ENCODE measurements at regions of chr3 and their contacts with region 1.

Region 1: DNA sequence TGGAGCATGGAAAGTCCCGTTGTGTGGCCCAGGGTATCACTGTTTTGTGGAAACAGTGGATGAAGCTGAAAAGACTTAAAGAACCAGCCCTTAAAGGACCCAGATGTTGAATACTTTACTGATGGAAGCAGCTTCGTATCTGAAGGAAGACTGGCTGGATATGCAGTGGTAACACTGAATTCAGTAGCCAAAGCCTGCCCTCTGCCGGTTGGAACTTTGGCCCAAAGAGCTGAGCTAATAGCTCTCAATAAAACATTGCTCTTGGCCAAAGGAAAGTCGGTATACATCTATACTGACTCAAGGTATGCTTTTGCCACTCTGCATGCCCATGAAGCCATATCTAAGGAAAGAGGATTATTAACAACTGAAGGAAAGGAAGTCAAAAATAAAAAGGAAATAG is 885.4 kb downstream of the PDCD6IP start:
- DNase-seq: peak in 3 of 5 donors; percentile 2 to 4 (median 2)
- H3K4me3 ChIP-seq: no peak overlapping the region
- H3K4me3 Mint-ChIP-seq: no peak overlapping the region
- H3K27ac ChIP-seq: no peak overlapping the region
- H3K27ac Mint-ChIP-seq: no peak overlapping the region
- H3K4me1 ChIP-seq: no peaks in the 10 kb centered on the region
- H3K4me1 Mint-ChIP-seq: no peaks in the 10 kb centered on the region
- H3K27me3 ChIP-seq: no peaks in the 10 kb centered on the region
- H3K27me3 Mint-ChIP-seq: no peaks in the 10 kb centered on the region

Region 2: DNA sequence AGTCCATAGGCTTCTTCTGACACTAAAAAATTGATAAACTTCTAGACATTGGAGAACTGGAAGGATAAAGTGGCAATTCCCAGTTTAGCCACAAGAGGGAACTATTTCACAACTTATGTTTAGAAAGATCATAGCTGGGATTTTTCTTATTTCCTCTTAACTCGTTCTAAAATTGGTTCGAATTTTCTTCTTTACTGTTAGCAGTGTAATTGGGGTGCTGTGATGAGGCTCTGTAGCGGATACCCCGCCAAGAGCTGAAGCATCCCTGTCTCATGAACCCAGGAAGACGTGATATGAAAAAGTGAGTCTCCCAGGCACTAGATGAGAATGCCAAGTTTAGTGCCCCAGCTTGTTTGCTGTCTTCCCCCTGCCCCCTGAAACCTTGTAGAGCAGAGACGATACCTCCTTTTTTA is 800.3 kb before region 1 on chr3:
- CTCF ChIA-PET with region 1: interaction called, 8 read pairs
- POLR2A ChIA-PET with region 1: no interaction called
- intact Hi-C with region 1: loop called (anchors 5 kb)
- DNase-seq: peak in 4 of 5 donors; percentile 40 to 43 (median 41)
- H3K4me3 ChIP-seq: no peak overlapping the region
- H3K4me3 Mint-ChIP-seq: peak overlapping the region in 6 of 8 donors; percentile 63 to 81 (median 75)
- H3K27ac ChIP-seq: no peak overlapping the region
- H3K27ac Mint-ChIP-seq: peak overlapping the region in 2 of 7 donors; percentile 7 to 81
- H3K4me1 ChIP-seq: peaks cover 4% of the 10 kb centered on the region
- H3K4me1 Mint-ChIP-seq: peaks cover 2 to 5% (median 3%) of the 10 kb centered on the region in 4 donors
- H3K27me3 ChIP-seq: no peaks in the 10 kb centered on the region
- H3K27me3 Mint-ChIP-seq: peaks cover 0 to 7% of the 10 kb centered on the region in 2 donors

Region 3: GRCh38 chr3:34842706-34843480 is 159.0 kb after region 1 on chr3:
- CTCF ChIA-PET with region 1: no interaction called
- POLR2A ChIA-PET with region 1: no interaction called
- intact Hi-C with region 1: no loop called
- DNase-seq: no peak
- H3K4me3 ChIP-seq: no peak overlapping the region
- H3K4me3 Mint-ChIP-seq: no peak overlapping the region
- H3K27ac ChIP-seq: no peak overlapping the region
- H3K27ac Mint-ChIP-seq: no peak overlapping the region
- H3K4me1 ChIP-seq: no peaks in the 10 kb centered on the region
- H3K4me1 Mint-ChIP-seq: no peaks in the 10 kb centered on the region
- H3K27me3 ChIP-seq: no peaks in the 10 kb centered on the region
- H3K27me3 Mint-ChIP-seq: no peaks in the 10 kb centered on the region